Breast epithelium (tissue), 4 donors: ENCODE measurements at regions of chrX and their contacts with region 1.

Region 1: GRCh38 chrX:23114159-23114558 is 114.4 kb downstream of the DDX53 start:
- DNase-seq: no peak
- H3K4me3 ChIP-seq: no peak overlapping the region
- H3K27ac ChIP-seq: no peak overlapping the region
- H3K4me1 ChIP-seq: no peaks in the 10 kb centered on the region
- H3K27me3 ChIP-seq: no peaks in the 10 kb centered on the region
- CTCF ChIP-seq: no peak
- POLR2A ChIP-seq: no peak

Region 2: GRCh38 chrX:22616867-22617266 is 497.3 kb before region 1 on chrX:
- intact Hi-C with region 1: no loop called
- DNase-seq: no peak
- H3K4me3 ChIP-seq: no peak overlapping the region
- H3K27ac ChIP-seq: no peak overlapping the region
- H3K4me1 ChIP-seq: no peaks in the 10 kb centered on the region
- H3K27me3 ChIP-seq: no peaks in the 10 kb centered on the region
- CTCF ChIP-seq: no peak
- POLR2A ChIP-seq: no peak

Region 3: GRCh38 chrX:23103546-23103945 is 10.6 kb before region 1 on chrX:
- intact Hi-C with region 1: no loop called
- DNase-seq: no peak
- H3K4me3 ChIP-seq: no peak overlapping the region
- H3K27ac ChIP-seq: no peak overlapping the region
- H3K4me1 ChIP-seq: no peaks in the 10 kb centered on the region
- H3K27me3 ChIP-seq: no peaks in the 10 kb centered on the region
- CTCF ChIP-seq: no peak
- POLR2A ChIP-seq: no peak

Region 4: GRCh38 chrX:23134136-23134535 is 20.0 kb after region 1 on chrX:
- intact Hi-C with region 1: loop called (anchors 2 kb)
- DNase-seq: no peak
- H3K4me3 ChIP-seq: no peak overlapping the region
- H3K27ac ChIP-seq: no peak overlapping the region
- H3K4me1 ChIP-seq: no peaks in the 10 kb centered on the region
- H3K27me3 ChIP-seq: peaks cover 0 to 6% of the 10 kb centered on the region in 2 donors
- CTCF ChIP-seq: no peak
- POLR2A ChIP-seq: no peak